Heart left ventricle (tissue), 16 donors: ENCODE measurements at regions of chr10 and their contacts with region 1.

Region 1: DNA sequence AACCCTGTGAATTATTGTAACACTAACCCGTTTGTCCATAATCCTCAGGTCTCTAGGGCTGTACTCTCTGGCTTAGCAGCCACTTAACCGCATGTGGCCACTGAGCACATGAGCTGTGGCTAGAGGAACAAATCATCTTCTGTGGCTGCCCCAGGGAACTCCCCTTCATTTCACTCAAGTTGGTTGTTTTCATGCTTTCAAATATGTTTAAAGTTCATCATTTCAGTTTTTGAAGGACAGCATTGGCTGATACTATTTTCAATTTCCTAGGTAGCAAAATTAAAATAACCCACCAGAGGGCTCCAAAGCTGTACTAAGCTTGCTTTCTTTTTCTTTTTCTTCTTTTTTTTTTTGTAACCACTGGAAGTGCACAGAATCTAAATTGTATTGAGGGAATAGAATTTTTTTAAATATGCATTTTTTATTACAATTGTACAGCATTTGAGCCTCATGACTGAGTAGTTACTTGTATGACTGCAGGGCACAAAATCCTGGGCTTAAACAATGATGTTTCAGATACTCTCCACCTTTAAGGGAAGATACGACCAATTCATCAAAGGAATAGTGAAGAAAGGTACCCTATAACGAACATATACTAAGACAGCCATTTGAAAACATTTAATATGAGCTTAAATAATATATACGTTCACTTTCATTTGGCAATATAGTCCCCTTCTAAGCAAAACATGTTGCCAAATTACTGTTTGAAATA is 38.6 kb downstream of the MRC1 start:
- DNase-seq: no peak
- ATAC-seq: peak in 2 of 4 donors; percentile 2 to 44
- H3K4me3 ChIP-seq: no peak overlapping the region
- H3K27ac ChIP-seq: no peak overlapping the region
- H3K4me1 ChIP-seq: peaks cover 0 to 12% (median 0%) of the 10 kb centered on the region in 12 donors
- H3K27me3 ChIP-seq: no peaks in the 10 kb centered on the region
- CTCF ChIP-seq: peak; percentile 24 to 61 (median 48)
- POLR2A ChIP-seq: no peak

Region 2: GRCh38 chr10:17617031-17617911 is 230.5 kb before region 1 on chr10 and contains the start of gene HACD1:
- intact Hi-C with region 1: loop called in 1 of 10 experiments (anchors 10 kb)
- DNase-seq: peak; percentile 61 to 86 (median 79)
- ATAC-seq: peak; percentile 52 to 90 (median 86)
- H3K4me3 ChIP-seq: peak within 1 kb of the TSS; percentile 66 to 96 (median 86)
- H3K27ac ChIP-seq: peak within 1 kb of the TSS; percentile 85 to 99 (median 98)
- H3K4me1 ChIP-seq: peaks cover 0 to 28% (median 4%) of the 10 kb centered on the region in 12 donors
- H3K27me3 ChIP-seq: peaks cover 0 to 11% (median 0%) of the 10 kb centered on the region in 9 donors
- CTCF ChIP-seq: peak in 5 of 12 donors; percentile 10 to 48 (median 41)
- POLR2A ChIP-seq: peak in 1 of 2 donors; percentile 79
- total RNA-seq, gene HACD1: 98.6 to 291 (median 155) TPM

Region 3: DNA sequence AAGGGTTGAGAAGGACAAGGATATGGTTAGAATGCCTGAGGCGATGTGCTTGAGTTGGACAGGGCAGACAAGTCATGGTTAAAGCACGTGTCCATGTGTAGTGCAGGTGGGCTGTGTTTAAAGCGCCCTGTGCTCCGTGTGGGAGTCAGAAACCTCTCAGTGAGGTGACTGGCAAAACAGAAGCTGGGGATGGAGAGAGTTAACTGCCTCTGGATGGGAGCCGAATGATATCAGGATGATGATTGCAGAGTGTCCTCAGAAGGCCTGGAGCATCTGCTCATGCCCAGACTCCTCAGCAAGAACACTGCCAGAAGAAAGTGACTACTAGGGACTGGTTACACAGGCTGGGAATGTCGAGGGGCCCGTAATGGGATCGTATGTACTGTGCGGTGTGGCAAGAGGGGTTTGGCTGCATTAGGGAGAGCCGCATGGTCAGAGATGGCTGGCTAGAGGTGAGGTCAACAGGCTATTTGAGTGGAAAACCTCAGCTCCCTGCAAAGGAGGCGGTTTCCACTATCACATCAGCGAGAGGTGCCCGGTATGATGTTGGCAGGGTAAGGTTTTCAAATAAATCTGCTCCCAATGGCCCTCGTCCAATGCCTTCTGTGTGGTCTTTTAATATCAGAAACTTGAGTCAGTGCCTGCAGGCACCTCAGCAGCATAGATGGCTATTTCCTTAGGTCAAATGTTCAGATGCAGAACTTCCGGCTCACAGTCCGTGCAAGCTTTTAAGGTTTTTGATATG is 64.6 kb before region 1 on chr10:
- intact Hi-C with region 1: no loop called
- DNase-seq: peak in 1 of 5 donors; percentile 34
- ATAC-seq: peak in 3 of 4 donors; percentile 51 to 72 (median 63)
- H3K4me3 ChIP-seq: peak overlapping the region in 2 of 12 donors; percentile 2 to 24
- H3K27ac ChIP-seq: peak overlapping the region in 7 of 12 donors; percentile 11 to 88 (median 25)
- H3K4me1 ChIP-seq: peaks cover 0 to 66% (median 6%) of the 10 kb centered on the region in 12 donors
- H3K27me3 ChIP-seq: no peaks in the 10 kb centered on the region
- CTCF ChIP-seq: no peak
- POLR2A ChIP-seq: no peak

Region 4: GRCh38 chr10:17882557-17882956 is 34.8 kb after region 1 on chr10:
- intact Hi-C with region 1: no loop called
- DNase-seq: no peak
- ATAC-seq: peak in 1 of 4 donors; percentile 34
- H3K4me3 ChIP-seq: no peak overlapping the region
- H3K27ac ChIP-seq: no peak overlapping the region
- H3K4me1 ChIP-seq: no peaks in the 10 kb centered on the region
- H3K27me3 ChIP-seq: no peaks in the 10 kb centered on the region
- CTCF ChIP-seq: no peak
- POLR2A ChIP-seq: no peak

Region 5: GRCh38 chr10:18204039-18204835 is 356.5 kb after region 1 on chr10:
- intact Hi-C with region 1: loop called in 1 of 10 experiments (anchors 5 kb)
- DNase-seq: no peak
- ATAC-seq: no peak
- H3K4me3 ChIP-seq: no peak overlapping the region
- H3K27ac ChIP-seq: peak overlapping the region in 1 of 12 donors; percentile 70
- H3K4me1 ChIP-seq: peaks cover 0 to 20% (median 4%) of the 10 kb centered on the region in 12 donors
- H3K27me3 ChIP-seq: no peaks in the 10 kb centered on the region
- CTCF ChIP-seq: no peak
- POLR2A ChIP-seq: no peak

Region 6: GRCh38 chr10:18233775-18234174 is 386.0 kb after region 1 on chr10:
- intact Hi-C with region 1: loop called in 2 of 10 experiments (anchors 5 kb)
- DNase-seq: peak; percentile 63 to 87 (median 84)
- ATAC-seq: peak; percentile 87 to 91 (median 89)
- H3K4me3 ChIP-seq: no peak overlapping the region
- H3K27ac ChIP-seq: peak overlapping the region in 2 of 12 donors; percentile 15 to 26
- H3K4me1 ChIP-seq: peaks cover 0 to 18% (median 3%) of the 10 kb centered on the region in 12 donors
- H3K27me3 ChIP-seq: no peaks in the 10 kb centered on the region
- CTCF ChIP-seq: peak; percentile 16 to 58 (median 35)
- POLR2A ChIP-seq: no peak

Region 7: DNA sequence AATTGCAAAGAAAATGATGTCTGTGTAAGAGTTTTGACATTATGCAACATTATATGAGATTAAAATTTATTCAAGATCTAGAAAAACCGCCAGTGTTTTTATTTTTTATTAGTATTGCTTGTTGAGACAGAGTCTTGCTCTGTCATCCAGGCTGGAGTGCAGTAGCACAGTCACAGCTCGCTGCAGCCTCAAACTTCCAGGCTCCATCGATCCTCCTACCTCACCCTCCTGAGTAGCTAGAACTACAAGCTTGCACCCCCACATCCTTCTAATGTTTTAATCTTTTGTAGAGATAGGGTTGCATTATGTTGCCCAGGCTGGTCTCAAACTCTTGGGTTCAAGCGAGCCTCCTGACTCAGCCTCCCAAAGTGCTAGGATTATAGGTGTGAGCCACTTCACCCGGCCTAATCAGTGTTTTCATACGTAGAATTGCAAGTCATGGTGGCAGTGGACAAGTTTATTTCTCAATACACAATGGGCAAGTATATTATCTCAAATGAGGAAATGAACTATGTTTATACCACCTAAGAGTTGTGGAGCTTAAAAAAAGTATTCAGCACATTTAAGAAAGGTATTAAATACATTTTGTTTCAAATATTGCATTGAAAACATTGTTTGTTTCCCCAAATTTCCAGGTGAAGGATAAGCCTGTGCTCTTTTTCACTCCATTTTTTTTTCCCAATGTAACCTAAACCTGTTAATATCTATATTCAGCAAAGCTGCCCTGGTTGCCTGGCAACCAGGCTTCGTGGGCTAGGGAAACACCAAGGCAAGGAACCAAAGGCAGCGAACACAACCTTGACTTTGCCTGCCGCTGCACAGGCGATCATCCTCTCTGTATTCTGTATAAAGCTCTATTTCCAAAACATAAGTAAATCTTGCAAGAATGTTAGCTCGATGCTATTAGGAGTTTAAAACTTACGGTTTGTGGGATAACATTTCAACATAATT is 456.4 kb after region 1 on chr10:
- intact Hi-C with region 1: loop called in 1 of 10 experiments (anchors 10 kb)
- DNase-seq: peak in 1 of 5 donors; percentile 39
- ATAC-seq: peak in 2 of 4 donors; percentile 37 to 48
- H3K4me3 ChIP-seq: no peak overlapping the region
- H3K27ac ChIP-seq: no peak overlapping the region
- H3K4me1 ChIP-seq: peaks cover 0 to 16% (median 0%) of the 10 kb centered on the region in 12 donors
- H3K27me3 ChIP-seq: no peaks in the 10 kb centered on the region
- CTCF ChIP-seq: no peak
- POLR2A ChIP-seq: no peak